ENCODE measurements at regions of chrX and their contacts with region 1.

Region 1: GRCh38 chrX:44542567-44543325 is at the start of gene FUNDC1:
- DNase-seq: peak; percentile 90 to 92 (median 91)
- H3K4me3 ChIP-seq: peak within 1 kb of the TSS; percentile 52 to 66
- H3K4me3 Mint-ChIP-seq: peak within 1 kb of the TSS; percentile 90 to 96 (median 96)
- H3K27ac ChIP-seq: peak within 1 kb of the TSS; percentile 73
- H3K27ac Mint-ChIP-seq: peak within 1 kb of the TSS; percentile 82 to 97 (median 96)
- H3K4me1 ChIP-seq: peaks cover 26% of the 10 kb centered on the region
- H3K4me1 Mint-ChIP-seq: peaks cover 11 to 38% (median 33%) of the 10 kb centered on the region in 4 donors
- H3K27me3 ChIP-seq: no peaks in the 10 kb centered on the region
- H3K27me3 Mint-ChIP-seq: no peaks in the 10 kb centered on the region
- total RNA-seq, gene FUNDC1: 7.4 to 8.7 TPM

Region 2: GRCh38 chrX:44025555-44025954 is 517.2 kb before region 1 on chrX:
- CTCF ChIA-PET with region 1: no interaction called
- POLR2A ChIA-PET with region 1: no interaction called
- intact Hi-C with region 1: loop called (anchors 10 kb)
- DNase-seq: no peak
- H3K4me3 ChIP-seq: no peak overlapping the region
- H3K4me3 Mint-ChIP-seq: no peak overlapping the region
- H3K27ac ChIP-seq: no peak overlapping the region
- H3K27ac Mint-ChIP-seq: no peak overlapping the region
- H3K4me1 ChIP-seq: no peaks in the 10 kb centered on the region
- H3K4me1 Mint-ChIP-seq: peaks cover 0 to 3% (median 2%) of the 10 kb centered on the region in 4 donors
- H3K27me3 ChIP-seq: no peaks in the 10 kb centered on the region
- H3K27me3 Mint-ChIP-seq: no peaks in the 10 kb centered on the region

Region 3: GRCh38 chrX:44669626-44670025 is 126.9 kb after region 1 on chrX:
- CTCF ChIA-PET with region 1: no interaction called
- POLR2A ChIA-PET with region 1: no interaction called
- intact Hi-C with region 1: no loop called
- DNase-seq: no peak
- H3K4me3 ChIP-seq: no peak overlapping the region
- H3K4me3 Mint-ChIP-seq: no peak overlapping the region
- H3K27ac ChIP-seq: no peak overlapping the region
- H3K27ac Mint-ChIP-seq: no peak overlapping the region
- H3K4me1 ChIP-seq: no peaks in the 10 kb centered on the region
- H3K4me1 Mint-ChIP-seq: no peaks in the 10 kb centered on the region
- H3K27me3 ChIP-seq: no peaks in the 10 kb centered on the region
- H3K27me3 Mint-ChIP-seq: no peaks in the 10 kb centered on the region

Region 4: DNA sequence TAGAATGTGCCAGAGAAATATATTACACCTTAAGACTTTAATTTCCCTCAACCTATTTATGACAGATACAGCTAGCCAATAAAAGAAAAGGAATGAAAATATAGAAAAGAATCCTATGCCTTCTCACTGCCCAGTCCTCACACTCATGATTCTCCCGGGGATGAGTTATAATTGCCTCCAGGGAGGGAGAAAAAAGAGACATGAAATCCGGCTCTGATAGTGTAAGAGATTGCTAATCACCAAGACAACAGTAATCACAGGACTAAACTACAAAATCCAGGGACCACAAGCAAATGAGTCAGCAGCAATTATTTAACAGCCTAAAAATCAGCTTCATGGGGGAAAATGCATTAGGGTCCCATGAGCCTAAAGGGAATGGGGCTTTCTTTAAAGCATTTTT is 205.2 kb after region 1 on chrX:
- CTCF ChIA-PET with region 1: no interaction called
- POLR2A ChIA-PET with region 1: no interaction called
- intact Hi-C with region 1: no loop called
- DNase-seq: no peak
- H3K4me3 ChIP-seq: no peak overlapping the region
- H3K4me3 Mint-ChIP-seq: no peak overlapping the region
- H3K27ac ChIP-seq: no peak overlapping the region
- H3K27ac Mint-ChIP-seq: peak overlapping the region in 1 of 7 donors; percentile 25
- H3K4me1 ChIP-seq: no peaks in the 10 kb centered on the region
- H3K4me1 Mint-ChIP-seq: peaks cover 0 to 5% (median 5%) of the 10 kb centered on the region in 4 donors
- H3K27me3 ChIP-seq: no peaks in the 10 kb centered on the region
- H3K27me3 Mint-ChIP-seq: no peaks in the 10 kb centered on the region

Region 5: DNA sequence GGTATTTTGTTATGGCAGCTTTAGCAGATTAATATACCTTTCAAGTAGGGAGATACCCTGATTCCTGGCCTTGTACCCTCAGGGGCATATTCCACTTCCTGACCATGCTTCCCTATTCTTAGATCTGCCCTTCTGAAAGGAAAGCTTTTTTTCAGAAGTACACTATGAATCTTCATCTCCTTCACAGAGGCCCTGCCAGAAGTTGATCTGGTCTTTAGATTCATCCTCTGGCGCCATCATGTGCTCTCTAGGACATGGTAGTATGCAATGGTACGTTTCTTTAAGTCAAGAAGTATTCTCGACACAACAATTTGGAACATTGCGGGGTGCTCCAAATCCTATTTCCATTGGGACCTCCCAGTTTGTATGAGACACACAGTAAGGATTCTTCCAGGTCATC is 697.6 kb after region 1 on chrX:
- CTCF ChIA-PET with region 1: no interaction called
- POLR2A ChIA-PET with region 1: no interaction called
- intact Hi-C with region 1: no loop called
- DNase-seq: no peak
- H3K4me3 ChIP-seq: no peak overlapping the region
- H3K4me3 Mint-ChIP-seq: no peak overlapping the region
- H3K27ac ChIP-seq: no peak overlapping the region
- H3K27ac Mint-ChIP-seq: no peak overlapping the region
- H3K4me1 ChIP-seq: no peaks in the 10 kb centered on the region
- H3K4me1 Mint-ChIP-seq: no peaks in the 10 kb centered on the region
- H3K27me3 ChIP-seq: no peaks in the 10 kb centered on the region
- H3K27me3 Mint-ChIP-seq: no peaks in the 10 kb centered on the region

Measured in CD4-positive, alpha-beta memory T cell (primary cell).